ENCODE measurements at regions of chr19 and their contacts with region 1.

Region 1: DNA sequence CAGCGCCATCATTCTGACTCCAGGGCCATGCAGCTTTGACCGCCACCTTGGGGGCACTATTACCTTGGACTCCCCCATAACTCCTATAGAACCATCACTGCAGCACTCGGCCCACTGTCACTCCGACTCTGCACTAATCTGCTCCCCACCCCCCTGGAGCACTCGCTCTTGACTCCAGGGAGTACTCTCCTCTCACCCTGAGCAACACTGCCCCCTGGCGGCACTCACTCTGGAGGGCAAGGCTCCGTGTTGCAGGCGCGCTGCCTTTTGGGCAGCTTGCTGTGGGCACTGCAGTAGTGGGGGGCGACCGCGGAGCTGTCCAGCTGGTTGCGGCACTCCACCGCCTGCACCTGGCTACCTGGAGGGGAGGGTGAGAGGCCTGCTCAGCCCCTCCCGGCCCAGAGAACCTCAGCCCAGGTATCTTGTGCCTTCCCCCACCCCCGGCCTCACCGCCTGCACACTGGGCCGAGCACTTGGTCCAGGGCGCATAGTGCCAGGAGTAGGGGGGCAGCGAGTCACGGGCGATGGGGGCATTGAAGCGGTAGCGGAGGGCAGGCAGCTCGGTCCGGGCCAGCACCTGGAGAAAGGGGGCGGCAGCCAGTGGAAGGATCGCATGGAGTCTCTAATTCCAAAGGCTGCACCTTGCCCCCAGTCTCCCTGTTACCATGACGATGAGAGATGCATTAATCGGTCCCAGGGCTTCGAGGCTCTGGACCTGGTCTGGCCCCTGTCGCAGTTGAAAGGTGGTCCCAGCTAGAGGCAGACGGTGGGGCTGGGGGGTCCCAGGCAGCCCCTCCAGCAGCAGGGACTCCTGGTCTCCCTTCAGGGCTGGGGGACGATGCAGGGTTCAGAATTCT is 8.9 kb upstream of the MYO1F start:
- DNase-seq: peak; percentile 65
- H3K4me3 Mint-ChIP-seq: no peak overlapping the region
- H3K27ac Mint-ChIP-seq: no peak overlapping the region
- H3K4me1 Mint-ChIP-seq: no peaks in the 10 kb centered on the region
- H3K27me3 Mint-ChIP-seq: peaks cover 10% of the 10 kb centered on the region
- CTCF ChIP-seq: peak; percentile 59

Region 2: DNA sequence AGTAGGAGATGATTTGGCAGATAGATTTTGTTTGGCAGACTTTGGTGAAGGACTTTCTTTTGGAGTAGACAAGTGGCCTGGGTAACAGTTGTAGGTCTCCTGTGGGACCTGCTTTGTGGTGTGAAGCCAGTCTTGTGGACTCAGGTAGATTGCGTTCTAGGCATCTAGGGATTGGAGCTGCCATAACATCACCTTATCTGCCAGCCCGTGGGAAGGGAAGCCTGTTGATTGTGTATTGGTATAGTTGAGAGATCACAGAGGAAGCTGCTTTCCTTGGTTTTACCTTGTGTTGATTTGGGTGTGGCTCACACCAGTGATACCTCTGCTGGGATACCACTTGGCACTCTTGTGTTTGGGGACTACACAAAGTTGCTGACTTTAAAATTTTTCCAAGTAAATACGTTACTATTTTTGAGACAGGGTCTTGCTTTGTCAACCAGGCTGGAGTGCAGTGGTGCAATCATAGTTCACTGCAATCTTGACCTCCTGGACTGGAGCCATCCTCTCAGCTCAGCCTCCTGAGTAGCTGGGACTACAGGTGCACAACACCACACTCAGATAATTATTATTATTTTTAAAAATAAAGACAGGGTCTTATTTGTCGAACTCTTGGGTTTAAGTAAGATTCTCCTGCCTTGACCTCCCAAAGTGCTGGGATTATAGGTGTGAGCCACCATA is 133.5 kb before region 1 on chr19:
- CTCF ChIA-PET with region 1: no interaction called
- POLR2A ChIA-PET with region 1: no interaction called
- intact Hi-C with region 1: no loop called
- DNase-seq: no peak
- H3K4me3 Mint-ChIP-seq: no peak overlapping the region
- H3K27ac Mint-ChIP-seq: no peak overlapping the region
- H3K4me1 Mint-ChIP-seq: peaks cover 35% of the 10 kb centered on the region
- H3K27me3 Mint-ChIP-seq: no peaks in the 10 kb centered on the region
- CTCF ChIP-seq: no peak

Region 3: DNA sequence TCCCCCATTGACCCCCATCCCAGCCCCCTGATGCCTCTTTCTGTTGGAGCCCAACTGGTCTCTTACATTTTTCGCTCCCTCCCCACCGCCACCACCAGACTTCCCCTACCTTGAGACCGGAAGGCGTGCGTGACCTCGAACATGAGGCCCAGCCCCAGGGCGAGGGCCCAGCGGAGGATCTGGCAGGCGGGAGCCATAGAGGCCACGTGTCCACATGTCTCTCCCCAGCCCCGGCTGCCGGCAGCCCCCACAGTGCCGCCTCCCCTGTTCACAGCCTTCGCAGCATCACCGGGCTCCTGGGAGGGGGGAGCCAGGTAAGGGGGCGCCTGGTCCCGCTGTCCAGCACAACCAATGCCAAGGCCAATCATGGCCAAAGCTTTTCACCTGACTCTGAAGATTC is 19.4 kb after region 1 on chr19:
- CTCF ChIA-PET with region 1: interaction called, 10 read pairs
- POLR2A ChIA-PET with region 1: no interaction called
- intact Hi-C with region 1: no loop called
- DNase-seq: no peak
- H3K4me3 Mint-ChIP-seq: no peak overlapping the region
- H3K27ac Mint-ChIP-seq: no peak overlapping the region
- H3K4me1 Mint-ChIP-seq: peaks cover 26% of the 10 kb centered on the region
- H3K27me3 Mint-ChIP-seq: no peaks in the 10 kb centered on the region
- CTCF ChIP-seq: no peak